Activated B cell treated with CpG ODN at 0.5 μM for 24 hours (primary cell): ENCODE measurements at regions of chr22 and their contacts with region 1.

Region 1: GRCh38 chr22:30920407-30920806 is 48.2 kb downstream of the MORC2 start:
- DNase-seq: peak; percentile 72
- ATAC-seq: peak; percentile 71
- H3K4me3 Mint-ChIP-seq: peak overlapping the region; percentile 58
- H3K27ac Mint-ChIP-seq: no peak overlapping the region
- H3K4me1 Mint-ChIP-seq: peaks cover 10% of the 10 kb centered on the region
- H3K27me3 Mint-ChIP-seq: no peaks in the 10 kb centered on the region
- CTCF ChIP-seq: peak; percentile 97

Region 2: DNA sequence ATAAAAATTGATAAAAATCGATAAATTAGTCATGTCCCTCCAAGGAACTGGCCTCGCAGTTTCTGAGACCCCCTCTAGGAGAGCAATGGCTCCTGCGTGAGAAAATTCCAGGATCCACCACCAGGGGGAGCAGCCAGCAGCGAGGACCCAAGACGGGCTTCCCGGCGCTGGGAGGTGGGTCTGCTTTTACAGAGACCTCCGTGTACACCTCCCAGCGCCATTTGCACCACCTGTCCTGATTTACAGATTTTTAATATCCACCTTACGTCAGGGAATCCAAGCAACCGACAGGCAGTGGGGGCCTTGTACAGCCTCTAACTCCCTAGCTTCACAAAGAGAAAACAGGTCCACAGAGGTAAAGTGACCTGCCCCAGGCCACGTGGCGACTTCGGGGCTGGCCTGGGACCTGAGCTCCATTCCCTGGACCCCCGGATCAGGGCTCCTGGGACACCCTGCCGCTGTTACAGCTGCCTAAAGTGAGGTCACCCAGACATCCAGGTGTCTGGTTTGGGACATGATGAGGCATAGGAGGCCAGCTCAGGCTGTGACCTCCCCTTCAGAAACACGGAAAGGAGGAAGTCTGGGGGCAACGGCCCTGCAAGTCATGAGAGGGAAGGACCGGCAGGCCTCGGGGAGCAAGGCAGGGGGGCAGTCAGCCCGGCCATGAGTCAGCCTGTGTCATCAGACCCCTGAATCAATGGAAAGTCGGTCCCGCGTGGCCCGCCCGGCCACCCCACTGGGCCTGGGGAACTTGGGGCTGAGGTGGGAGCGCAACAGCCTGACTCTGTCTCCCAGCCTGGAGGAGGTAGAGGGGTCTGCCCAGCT is 657.3 kb before region 1 on chr22:
- CTCF ChIA-PET with region 1: no interaction called
- POLR2A ChIA-PET with region 1: no interaction called
- intact Hi-C with region 1: loop called (anchors 10 kb)
- DNase-seq: peak; percentile 72
- ATAC-seq: peak; percentile 13
- H3K4me3 Mint-ChIP-seq: peak overlapping the region; percentile 59
- H3K27ac Mint-ChIP-seq: peak overlapping the region; percentile 18
- H3K4me1 Mint-ChIP-seq: peaks cover 27% of the 10 kb centered on the region
- H3K27me3 Mint-ChIP-seq: no peaks in the 10 kb centered on the region
- CTCF ChIP-seq: peak; percentile 97

Region 3: GRCh38 chr22:30763815-30764686 is 156.4 kb before region 1 on chr22:
- CTCF ChIA-PET with region 1: interaction called, 4 read pairs
- POLR2A ChIA-PET with region 1: no interaction called
- intact Hi-C with region 1: loop called (anchors 1 kb)
- DNase-seq: no peak
- ATAC-seq: no peak
- H3K4me3 Mint-ChIP-seq: no peak overlapping the region
- H3K27ac Mint-ChIP-seq: no peak overlapping the region
- H3K4me1 Mint-ChIP-seq: no peaks in the 10 kb centered on the region
- H3K27me3 Mint-ChIP-seq: peaks cover 3% of the 10 kb centered on the region
- CTCF ChIP-seq: no peak

Region 4: DNA sequence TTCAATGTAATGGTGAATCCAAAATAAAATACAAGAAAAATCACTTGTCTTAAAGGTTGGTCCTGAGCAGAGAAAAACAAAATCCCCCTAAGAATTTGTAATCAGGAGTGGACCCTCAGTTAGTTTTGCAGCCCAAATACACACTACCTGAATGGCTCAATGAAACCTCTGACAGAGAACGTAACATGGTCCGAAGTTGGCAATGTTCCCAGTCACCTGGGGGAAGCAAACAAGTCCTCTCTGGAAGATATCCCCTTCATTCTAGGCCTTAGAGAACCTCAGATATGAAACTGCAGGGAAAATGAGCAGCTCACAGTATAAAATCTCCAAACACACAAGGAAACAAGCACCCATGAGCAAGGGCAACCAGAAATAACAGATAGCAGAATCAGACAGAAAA is 10.0 kb before region 1 on chr22:
- CTCF ChIA-PET with region 1: interaction called, 10 read pairs
- POLR2A ChIA-PET with region 1: no interaction called
- intact Hi-C with region 1: no loop called
- DNase-seq: no peak
- ATAC-seq: no peak
- H3K4me3 Mint-ChIP-seq: no peak overlapping the region
- H3K27ac Mint-ChIP-seq: no peak overlapping the region
- H3K4me1 Mint-ChIP-seq: no peaks in the 10 kb centered on the region
- H3K27me3 Mint-ChIP-seq: no peaks in the 10 kb centered on the region
- CTCF ChIP-seq: no peak

Region 5: DNA sequence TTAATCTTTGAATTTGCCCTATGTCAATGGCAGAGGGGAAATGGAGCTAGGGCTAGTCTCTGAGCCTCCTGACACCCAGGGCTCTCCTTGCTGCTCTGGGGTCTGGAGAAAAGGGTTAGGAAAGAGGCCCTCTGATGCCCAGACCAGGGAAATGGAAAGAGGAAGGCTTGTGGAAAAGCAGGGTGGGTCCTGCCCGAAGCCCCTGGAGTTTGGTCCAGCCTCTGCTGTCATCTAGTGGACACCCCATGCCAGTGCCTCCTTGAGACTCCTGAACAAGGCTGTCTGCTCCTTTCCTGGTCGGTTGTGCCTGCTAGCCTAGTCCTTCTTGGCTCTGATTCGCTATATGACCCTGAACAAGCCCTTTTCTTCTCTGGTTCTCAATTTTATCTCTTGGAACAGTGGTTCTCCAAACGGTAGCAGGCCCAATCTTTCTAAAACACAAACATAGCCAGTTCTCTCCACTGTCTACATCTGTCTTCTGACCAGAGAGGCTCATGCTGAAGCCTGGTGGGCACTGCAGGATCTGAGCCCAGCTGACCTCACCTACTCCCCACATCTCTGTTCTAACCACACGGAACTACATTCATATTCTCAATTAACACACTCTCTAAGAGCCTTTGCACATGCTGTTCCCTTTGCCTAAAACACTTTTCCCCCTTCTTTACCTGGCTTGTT is 228.7 kb after region 1 on chr22:
- CTCF ChIA-PET with region 1: no interaction called
- POLR2A ChIA-PET with region 1: no interaction called
- intact Hi-C with region 1: loop called (anchors 1 kb)
- DNase-seq: no peak
- ATAC-seq: peak; percentile 77
- H3K4me3 Mint-ChIP-seq: no peak overlapping the region
- H3K27ac Mint-ChIP-seq: no peak overlapping the region
- H3K4me1 Mint-ChIP-seq: peaks cover 1% of the 10 kb centered on the region
- H3K27me3 Mint-ChIP-seq: peaks cover 2% of the 10 kb centered on the region
- CTCF ChIP-seq: no peak